Gastrocnemius medialis (tissue), 4 donors: ENCODE measurements at regions of chr10 and their contacts with region 1.

Region 1: DNA sequence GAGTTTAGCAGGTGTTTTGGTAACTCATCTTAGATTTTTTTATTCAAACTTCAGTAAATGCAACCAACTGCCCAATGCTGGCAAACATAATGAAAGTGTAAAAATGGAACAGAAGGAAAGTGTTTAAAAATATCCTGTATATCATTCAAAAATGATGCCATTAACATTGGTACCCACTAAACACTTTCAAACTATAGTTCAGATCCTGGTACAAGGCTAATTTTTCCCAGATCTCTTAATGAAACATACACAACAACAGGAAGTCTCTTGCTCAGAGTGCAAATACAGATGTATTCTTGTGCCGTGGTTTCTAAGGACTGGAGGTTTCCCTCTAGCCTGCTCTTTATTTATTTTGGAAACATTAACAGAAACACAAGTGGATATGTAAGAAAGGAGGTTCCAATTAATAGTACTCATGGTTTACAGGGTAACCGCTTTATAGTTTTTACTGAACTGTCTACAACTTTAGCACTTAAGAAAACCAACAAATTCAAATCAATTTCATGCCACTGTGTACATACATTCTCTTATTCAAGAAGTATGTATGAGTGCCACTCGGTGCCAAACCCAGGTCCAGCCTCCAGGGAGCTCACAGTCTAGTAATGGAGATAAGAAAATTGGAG is 176.0 kb upstream of the AKR1E2 start:
- DNase-seq: no peak
- ATAC-seq: peak in 1 of 2 donors; percentile 20
- H3K4me3 ChIP-seq: no peak overlapping the region
- H3K27ac ChIP-seq: peak overlapping the region; percentile 58 to 73 (median 63)
- H3K4me1 ChIP-seq: peaks cover 25 to 28% of the 10 kb centered on the region in 2 donors
- H3K27me3 ChIP-seq: no peaks in the 10 kb centered on the region
- CTCF ChIP-seq: no peak
- POLR2A ChIP-seq: no peak

Region 2: GRCh38 chr10:4174197-4174596 is 475.8 kb before region 1 on chr10:
- in situ Hi-C with region 1: no loop called
- intact Hi-C with region 1: loop called (anchors 10 kb)
- DNase-seq: no peak
- ATAC-seq: no peak
- H3K4me3 ChIP-seq: no peak overlapping the region
- H3K27ac ChIP-seq: no peak overlapping the region
- H3K4me1 ChIP-seq: no peaks in the 10 kb centered on the region
- H3K27me3 ChIP-seq: no peaks in the 10 kb centered on the region
- CTCF ChIP-seq: no peak
- POLR2A ChIP-seq: no peak

Region 3: DNA sequence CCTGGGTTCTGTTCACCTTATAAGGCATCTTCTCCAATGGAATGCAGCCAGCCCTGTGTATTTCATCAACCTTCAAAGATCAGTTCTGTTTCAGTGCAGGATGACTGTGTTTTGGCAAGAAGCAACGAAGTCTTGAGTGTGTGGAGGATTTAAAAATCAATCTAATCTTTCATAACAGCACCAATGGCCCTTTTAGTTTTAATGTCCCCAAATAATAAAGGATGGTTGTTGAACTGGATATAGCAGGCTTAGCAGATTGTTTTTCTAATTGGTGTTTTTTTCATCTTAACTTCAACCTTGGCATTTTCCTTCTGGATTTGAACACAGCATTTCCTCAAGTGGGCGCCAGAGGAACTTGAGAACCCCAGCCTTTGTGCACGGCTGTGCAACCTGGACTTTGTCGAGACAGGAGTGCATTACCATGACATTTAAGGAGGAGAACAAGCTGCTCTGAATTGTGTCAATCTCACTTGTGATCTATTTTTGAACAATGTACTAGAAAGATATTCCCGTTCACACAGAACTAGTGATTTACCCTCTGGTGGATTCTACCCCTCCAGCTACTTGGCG is 137.2 kb before region 1 on chr10:
- in situ Hi-C with region 1: loop called in 1 of 4 experiments (anchors 10 kb)
- intact Hi-C with region 1: no loop called
- DNase-seq: peak in 1 of 2 donors; percentile 22
- ATAC-seq: peak in 1 of 2 donors; percentile 40
- H3K4me3 ChIP-seq: no peak overlapping the region
- H3K27ac ChIP-seq: no peak overlapping the region
- H3K4me1 ChIP-seq: peaks cover 0 to 19% of the 10 kb centered on the region in 2 donors
- H3K27me3 ChIP-seq: no peaks in the 10 kb centered on the region
- CTCF ChIP-seq: peak in 4 of 5 experiments; percentile 20 to 38 (median 24)
- POLR2A ChIP-seq: no peak